ENCODE measurements at regions of chr12 and their contacts with region 1.

Region 1: GRCh38 chr12:110468212-110469048 is at the starts of genes FAM216A and GPN3:
- DNase-seq: peak; percentile 98
- H3K4me3 Mint-ChIP-seq: peak within 1 kb of the TSS; percentile 98
- H3K27ac Mint-ChIP-seq: peak within 1 kb of the TSS; percentile 96
- H3K4me1 Mint-ChIP-seq: peaks cover 41% of the 10 kb centered on the region
- H3K27me3 Mint-ChIP-seq: no peaks in the 10 kb centered on the region
- total RNA-seq, gene FAM216A: 37.0 to 39.5 TPM
- total RNA-seq, gene GPN3: 58.2 to 59.8 TPM

Region 2: DNA sequence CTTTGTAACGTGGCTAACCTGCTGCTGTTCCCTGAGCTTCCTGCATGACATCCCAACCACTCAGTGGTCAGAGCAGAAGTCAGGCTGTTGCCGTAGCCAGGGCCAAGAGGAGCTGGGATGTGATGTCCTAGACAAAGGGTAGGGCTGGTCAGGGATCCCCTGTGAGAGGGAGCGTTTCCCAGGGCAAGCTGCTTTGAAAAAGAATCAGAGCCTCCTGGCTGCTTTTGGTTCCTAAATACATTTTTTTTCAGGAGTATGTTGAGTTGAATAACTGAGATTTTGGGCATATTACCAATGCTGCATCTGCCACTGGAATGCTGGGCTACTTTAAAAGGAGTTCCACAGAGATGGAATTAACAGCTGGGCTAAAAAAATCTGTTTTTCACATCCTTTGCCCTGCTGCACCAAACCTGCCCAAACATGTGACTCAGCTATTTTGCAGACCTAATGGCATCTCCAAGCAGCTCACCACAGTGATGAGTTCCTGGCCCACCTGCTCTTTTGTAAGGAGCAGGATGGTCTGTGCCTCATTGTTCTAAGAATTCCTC is 445.3 kb before region 1 on chr12:
- CTCF ChIA-PET with region 1: no interaction called
- intact Hi-C with region 1: no loop called
- DNase-seq: no peak
- H3K4me3 Mint-ChIP-seq: no peak overlapping the region
- H3K27ac Mint-ChIP-seq: no peak overlapping the region
- H3K4me1 Mint-ChIP-seq: peaks cover 21% of the 10 kb centered on the region
- H3K27me3 Mint-ChIP-seq: no peaks in the 10 kb centered on the region

Region 3: DNA sequence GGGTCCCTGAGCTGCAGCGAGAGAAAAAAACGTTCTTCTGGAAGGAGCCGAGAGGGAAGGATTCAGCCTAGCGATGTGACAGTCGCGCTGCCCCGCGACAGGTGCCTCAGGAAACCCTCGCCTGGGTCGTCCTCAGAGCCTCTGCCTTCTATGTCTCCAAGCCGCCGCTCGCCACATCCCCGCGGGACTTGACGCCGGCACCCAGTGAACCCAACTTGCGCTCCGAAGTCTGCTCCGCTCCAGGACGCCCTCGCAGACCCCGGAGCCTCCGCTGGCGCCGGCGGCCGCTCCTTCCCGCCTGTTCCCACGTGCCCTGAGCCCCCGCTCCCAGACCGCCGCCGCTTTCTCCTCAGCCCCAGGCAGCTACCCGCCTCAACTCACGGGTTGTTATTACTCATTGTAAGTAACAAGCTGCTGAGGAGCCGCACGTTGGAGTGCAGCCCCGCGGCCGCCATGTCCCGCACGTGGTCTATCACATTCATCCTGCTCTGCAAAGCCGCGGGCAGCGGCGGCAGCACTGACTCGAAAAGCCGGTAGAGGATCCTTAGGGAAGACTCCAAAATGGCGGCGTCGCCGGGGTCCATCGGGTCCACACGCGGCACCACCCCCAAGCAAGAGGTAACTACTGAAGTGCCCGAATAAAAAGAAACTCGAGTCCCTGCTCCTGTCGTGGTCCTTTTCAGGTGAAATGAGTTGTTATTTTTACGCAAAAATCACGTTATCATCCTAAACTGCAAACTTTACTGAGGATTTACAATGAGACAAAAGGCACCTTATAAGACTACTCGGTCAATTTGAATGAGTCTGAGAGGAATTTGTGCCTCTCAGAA is 65.1 kb before region 1 on chr12 and contains the start of gene ANAPC7:
- CTCF ChIA-PET with region 1: no interaction called
- intact Hi-C with region 1: loop called (anchors 1 kb)
- DNase-seq: peak; percentile 92
- H3K4me3 Mint-ChIP-seq: peak within 1 kb of the TSS; percentile 98
- H3K27ac Mint-ChIP-seq: peak within 1 kb of the TSS; percentile 99
- H3K4me1 Mint-ChIP-seq: peaks cover 27% of the 10 kb centered on the region
- H3K27me3 Mint-ChIP-seq: no peaks in the 10 kb centered on the region
- total RNA-seq, gene ANAPC7: 51.2 to 61.2 TPM

Region 4: DNA sequence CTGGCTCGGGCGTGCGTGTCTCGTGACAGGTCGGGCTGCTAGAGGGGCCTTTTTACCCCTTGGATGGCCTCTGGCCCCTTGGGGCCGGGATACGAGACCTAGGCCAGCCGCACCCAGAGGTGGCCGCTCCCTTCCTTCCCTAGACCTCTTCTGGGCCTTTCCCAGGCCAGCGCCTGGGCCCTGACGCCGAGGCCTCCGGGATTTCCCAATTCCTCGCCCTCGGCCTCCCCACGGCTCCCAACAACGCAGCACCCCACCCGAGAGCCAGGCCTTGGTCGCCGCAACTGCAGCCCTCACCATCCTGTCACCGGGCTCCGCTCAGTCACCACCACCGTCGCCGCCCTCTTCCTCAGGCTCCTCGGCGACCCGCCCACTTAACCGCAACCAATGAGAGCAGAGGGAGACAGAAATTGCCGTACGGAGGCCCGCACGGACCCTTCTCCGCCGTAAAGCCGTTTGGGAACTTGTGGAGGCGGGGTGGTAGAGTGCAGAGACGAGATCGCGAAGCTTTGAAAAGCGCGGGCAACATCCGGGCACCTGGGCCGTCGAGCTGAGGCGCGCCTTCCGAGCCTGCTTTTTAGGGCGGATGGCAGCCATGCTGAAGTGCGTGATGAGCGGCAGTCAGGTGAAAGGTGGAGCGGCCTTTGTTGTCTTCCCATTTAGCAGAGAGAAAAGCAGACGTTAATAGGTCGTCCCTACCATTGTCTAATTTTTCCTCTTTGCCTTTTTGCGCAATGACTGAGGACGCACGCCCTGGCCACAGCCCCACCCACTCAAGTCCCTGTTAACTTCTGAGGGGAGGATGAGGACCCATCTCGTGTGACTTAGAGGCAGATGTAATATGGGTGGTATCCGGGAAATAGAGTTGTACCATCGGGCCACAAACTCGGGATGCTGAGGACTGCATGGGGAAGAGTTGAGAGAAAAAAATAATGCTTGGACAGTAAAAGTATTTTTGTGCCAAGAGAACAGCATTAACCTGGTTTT is 33.6 kb after region 1 on chr12 and contains the starts of genes RAD9B and VPS29:
- CTCF ChIA-PET with region 1: interaction called, 7 read pairs
- intact Hi-C with region 1: loop called (anchors 1 kb)
- DNase-seq: peak; percentile 100
- H3K4me3 Mint-ChIP-seq: peak within 1 kb of the TSS; percentile 94
- H3K27ac Mint-ChIP-seq: peak within 1 kb of the TSS; percentile 96
- H3K4me1 Mint-ChIP-seq: peaks cover 32% of the 10 kb centered on the region
- H3K27me3 Mint-ChIP-seq: no peaks in the 10 kb centered on the region
- total RNA-seq, gene RAD9B: 1.1 to 1.5 TPM
- total RNA-seq, gene VPS29: 76.6 to 81.8 TPM

Region 5: DNA sequence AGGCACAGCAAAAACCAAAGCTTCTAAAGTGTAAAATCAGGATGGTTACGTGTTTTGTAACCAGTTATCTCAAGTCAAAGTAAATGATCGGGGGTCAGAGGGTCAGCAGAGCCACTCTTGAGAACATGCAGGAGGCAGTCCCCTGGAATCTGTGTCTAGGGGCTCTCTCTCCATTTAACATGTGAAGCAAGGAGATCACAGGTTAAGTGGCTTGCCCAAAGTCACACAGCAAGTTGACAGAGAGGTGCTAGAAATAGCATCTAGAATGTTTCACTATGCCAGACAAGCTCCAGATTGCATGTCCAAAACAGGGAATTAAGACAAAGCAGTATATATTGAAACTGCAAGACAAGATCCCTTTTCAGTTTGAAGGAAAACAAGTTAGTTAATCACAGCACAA is 81.3 kb after region 1 on chr12:
- CTCF ChIA-PET with region 1: no interaction called
- intact Hi-C with region 1: loop called (anchors 5 kb)
- DNase-seq: no peak
- H3K4me3 Mint-ChIP-seq: no peak overlapping the region
- H3K27ac Mint-ChIP-seq: no peak overlapping the region
- H3K4me1 Mint-ChIP-seq: peaks cover 39% of the 10 kb centered on the region
- H3K27me3 Mint-ChIP-seq: no peaks in the 10 kb centered on the region

Region 6: DNA sequence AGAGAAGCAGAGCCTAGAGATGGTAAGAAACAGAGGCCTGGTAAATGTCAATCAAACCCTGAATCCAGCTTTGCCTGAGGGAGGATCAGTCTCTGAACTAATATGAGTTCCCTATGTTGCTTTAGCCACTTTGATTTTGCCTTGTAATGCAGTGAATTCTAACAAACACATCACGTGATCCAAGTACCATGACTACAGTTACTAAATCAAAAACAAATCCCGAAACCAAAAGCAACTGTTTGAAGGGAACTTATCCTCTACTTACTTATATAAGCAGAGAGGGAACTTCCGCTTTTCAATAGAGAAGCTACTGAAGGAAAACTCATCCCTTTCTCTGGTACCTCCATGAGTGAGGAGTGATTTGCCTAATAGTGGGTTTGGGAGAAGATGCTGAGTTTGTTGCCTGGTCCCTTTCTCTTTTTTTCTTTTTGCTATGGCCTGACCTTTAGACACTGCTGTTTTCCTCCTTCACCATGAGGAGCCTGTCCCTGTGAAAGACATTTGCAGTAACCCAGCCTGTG is 122.4 kb after region 1 on chr12:
- CTCF ChIA-PET with region 1: no interaction called
- intact Hi-C with region 1: loop called (anchors 2 kb)
- DNase-seq: no peak
- H3K4me3 Mint-ChIP-seq: peak overlapping the region; percentile 21
- H3K27ac Mint-ChIP-seq: peak overlapping the region; percentile 90
- H3K4me1 Mint-ChIP-seq: peaks cover 31% of the 10 kb centered on the region
- H3K27me3 Mint-ChIP-seq: no peaks in the 10 kb centered on the region

Region 7: GRCh38 chr12:110698171-110698902 is 229.9 kb after region 1 on chr12:
- CTCF ChIA-PET with region 1: no interaction called
- intact Hi-C with region 1: loop called (anchors 2 kb)
- DNase-seq: peak; percentile 90
- H3K4me3 Mint-ChIP-seq: no peak overlapping the region
- H3K27ac Mint-ChIP-seq: peak overlapping the region; percentile 57
- H3K4me1 Mint-ChIP-seq: peaks cover 17% of the 10 kb centered on the region
- H3K27me3 Mint-ChIP-seq: no peaks in the 10 kb centered on the region

Measured in activated naive CD4-positive, alpha-beta T cell treated with anti-CD3 and anti-CD28 coated beads for 36 hours (primary cell).